Endothelial cell of umbilical vein (primary cell): ENCODE measurements at regions of chrX and their contacts with region 1.

Region 1: GRCh38 chrX:11427453-11428071 is 134.3 kb downstream of the AMELX start:
- DNase-seq: peak; percentile 29
- H3K4me3 ChIP-seq: peak overlapping the region; percentile 2 to 54 (median 27)
- H3K27ac ChIP-seq: no peak overlapping the region
- H3K4me1 ChIP-seq: peaks cover 4% of the 10 kb centered on the region
- H3K27me3 ChIP-seq: no peaks in the 10 kb centered on the region
- CTCF ChIP-seq: peak; percentile 28 to 62
- POLR2A ChIP-seq: no peak

Region 2: DNA sequence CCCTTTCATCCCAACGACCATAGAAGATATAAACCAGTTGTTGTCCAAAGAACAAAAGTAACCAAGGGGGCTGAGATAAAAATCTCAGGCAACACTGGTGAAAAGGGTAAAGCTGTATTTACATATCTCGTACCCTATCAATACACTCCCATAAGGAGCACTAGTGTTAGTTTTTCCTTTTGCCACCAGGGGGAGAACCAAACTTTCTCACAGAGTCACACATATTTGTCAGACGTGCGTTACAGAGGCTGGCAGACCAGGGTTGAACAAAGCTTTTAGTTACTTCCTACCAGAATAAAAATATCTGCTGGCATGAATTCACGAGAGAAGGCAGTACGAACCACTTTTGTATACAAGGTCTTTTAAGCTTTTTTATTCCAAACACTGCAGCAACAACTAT is 46.1 kb before region 1 on chrX:
- CTCF ChIA-PET with region 1: interaction called, 3 read pairs
- POLR2A ChIA-PET with region 1: no interaction called
- dilution Hi-C with region 1: no loop called
- intact Hi-C with region 1: loop called (anchors 2 kb)
- DNase-seq: peak; percentile 74
- H3K4me3 ChIP-seq: no peak overlapping the region
- H3K27ac ChIP-seq: no peak overlapping the region
- H3K4me1 ChIP-seq: peaks cover 3% of the 10 kb centered on the region
- H3K27me3 ChIP-seq: no peaks in the 10 kb centered on the region
- CTCF ChIP-seq: peak; percentile 35 to 46
- POLR2A ChIP-seq: no peak

Region 3: DNA sequence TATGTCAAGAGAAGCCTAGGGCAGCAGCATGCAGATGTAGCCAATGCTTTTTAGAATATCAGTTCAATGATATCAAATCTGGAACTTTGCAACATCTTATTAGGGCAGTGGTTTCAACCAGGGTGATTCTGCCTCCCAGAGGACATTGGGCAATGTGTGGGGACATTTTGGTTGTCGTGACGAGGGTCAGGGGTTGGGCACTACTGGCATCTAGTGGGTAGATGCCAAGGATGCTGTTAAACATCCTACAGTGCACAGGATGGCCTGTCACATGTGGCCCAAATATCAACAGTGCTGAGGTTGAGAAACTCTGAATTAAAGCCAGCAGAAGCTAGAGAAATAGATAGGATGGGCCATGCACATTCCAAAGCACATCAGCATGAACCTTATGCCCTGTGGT is 18.0 kb after region 1 on chrX:
- CTCF ChIA-PET with region 1: no interaction called
- POLR2A ChIA-PET with region 1: no interaction called
- dilution Hi-C with region 1: no loop called
- intact Hi-C with region 1: no loop called
- DNase-seq: no peak
- H3K4me3 ChIP-seq: no peak overlapping the region
- H3K27ac ChIP-seq: no peak overlapping the region
- H3K4me1 ChIP-seq: no peaks in the 10 kb centered on the region
- H3K27me3 ChIP-seq: no peaks in the 10 kb centered on the region
- CTCF ChIP-seq: no peak
- POLR2A ChIP-seq: no peak